ENCODE measurements at regions of chr21 and their contacts with region 1.

Region 1: GRCh38 chr21:20999659-21000058 is 1.4 kb downstream of the NCAM2 start:
- DNase-seq: peak in 2 of 3 donors; percentile 15 to 42
- ATAC-seq: peak; percentile 37 to 55
- H3K4me3 ChIP-seq: no peak overlapping the region
- H3K27ac ChIP-seq: no peak overlapping the region
- H3K4me1 ChIP-seq: no peaks in the 10 kb centered on the region
- H3K27me3 ChIP-seq: no peaks in the 10 kb centered on the region

Region 2: DNA sequence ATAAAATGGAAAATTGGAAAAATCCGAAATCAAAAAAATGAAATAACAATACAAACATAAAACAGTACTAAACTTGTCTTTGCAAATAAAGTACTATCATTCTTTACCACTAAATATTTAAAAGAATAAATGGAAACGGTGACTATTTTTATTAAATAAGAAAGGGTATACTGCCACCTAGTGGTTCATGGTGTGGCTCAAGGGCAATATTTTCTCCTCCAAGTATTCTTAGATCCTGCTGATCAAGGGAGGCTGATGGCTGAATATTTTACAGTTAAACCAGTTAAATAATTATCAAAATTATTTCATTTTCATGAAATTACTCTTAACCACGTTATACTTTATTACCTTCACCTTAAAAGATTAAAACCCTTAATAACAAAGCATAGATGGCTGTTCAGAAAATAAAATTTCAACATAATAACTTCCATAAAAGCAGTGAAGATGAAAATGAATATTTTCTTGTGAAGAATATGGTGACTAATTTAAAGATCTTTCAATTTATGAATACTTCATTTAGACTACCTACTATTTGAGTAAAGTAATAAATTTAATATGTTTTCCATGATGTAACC is 1792.4 kb after region 1 on chr21:
- intact Hi-C with region 1: loop called in 1 of 4 experiments (anchors 10 kb)
- DNase-seq: no peak
- ATAC-seq: no peak
- H3K4me3 ChIP-seq: no peak overlapping the region
- H3K27ac ChIP-seq: no peak overlapping the region
- H3K4me1 ChIP-seq: no peaks in the 10 kb centered on the region
- H3K27me3 ChIP-seq: no peaks in the 10 kb centered on the region

Measured in right cardiac atrium (tissue), 5 donors.